ENCODE measurements at regions of chr11 and their contacts with region 1.

Region 1: DNA sequence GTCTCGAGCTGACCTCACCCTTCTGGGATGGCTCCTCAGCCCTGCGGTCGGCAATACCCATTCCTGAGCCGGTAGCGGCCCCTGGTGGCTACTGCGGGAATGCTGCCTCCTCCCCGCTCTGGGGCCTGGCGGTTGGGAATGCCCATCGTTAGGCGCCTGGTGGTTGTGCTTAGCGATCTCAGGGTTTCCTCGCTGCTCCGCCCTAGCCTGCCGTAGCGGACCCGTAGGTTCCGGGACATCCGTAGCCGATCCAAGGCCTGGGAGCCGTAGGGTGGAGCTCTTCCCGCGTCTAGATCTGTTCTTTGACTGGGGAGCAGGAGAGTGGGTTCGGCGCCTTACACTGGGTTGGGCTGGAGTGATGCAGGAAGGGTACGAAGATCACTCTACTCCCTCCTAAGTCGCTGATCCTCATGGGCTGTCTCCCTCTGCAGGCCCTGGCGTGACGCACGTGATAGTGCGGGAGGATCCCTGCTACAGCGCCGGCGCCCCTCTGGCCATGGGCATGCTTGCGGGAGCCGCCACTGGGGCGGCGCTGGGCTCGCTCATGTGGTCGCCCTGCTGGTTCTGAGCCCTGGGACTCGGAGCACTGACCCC is 14.8 kb downstream of the PLEKHB1 start:
- DNase-seq: peak; percentile 50 to 87
- H3K4me3 ChIP-seq: no peak overlapping the region
- H3K27ac ChIP-seq: no peak overlapping the region
- H3K4me1 ChIP-seq: peaks cover 14% of the 10 kb centered on the region
- H3K27me3 ChIP-seq: no peaks in the 10 kb centered on the region
- CTCF ChIP-seq: peak; percentile 97

Region 2: GRCh38 chr11:73404048-73404447 is 257.1 kb before region 1 on chr11:
- CTCF ChIA-PET with region 1: no interaction called
- POLR2A ChIA-PET with region 1: no interaction called
- intact Hi-C with region 1: loop called (anchors 1 kb)
- DNase-seq: peak in 1 of 2 experiments; percentile 47
- H3K4me3 ChIP-seq: no peak overlapping the region
- H3K27ac ChIP-seq: no peak overlapping the region
- H3K4me1 ChIP-seq: no peaks in the 10 kb centered on the region
- H3K27me3 ChIP-seq: no peaks in the 10 kb centered on the region
- CTCF ChIP-seq: peak; percentile 58

Region 3: GRCh38 chr11:73554671-73555320 is 106.3 kb before region 1 on chr11:
- CTCF ChIA-PET with region 1: no interaction called
- POLR2A ChIA-PET with region 1: no interaction called
- intact Hi-C with region 1: no loop called
- DNase-seq: no peak
- H3K4me3 ChIP-seq: no peak overlapping the region
- H3K27ac ChIP-seq: no peak overlapping the region
- H3K4me1 ChIP-seq: no peaks in the 10 kb centered on the region
- H3K27me3 ChIP-seq: no peaks in the 10 kb centered on the region
- CTCF ChIP-seq: no peak

Region 4: DNA sequence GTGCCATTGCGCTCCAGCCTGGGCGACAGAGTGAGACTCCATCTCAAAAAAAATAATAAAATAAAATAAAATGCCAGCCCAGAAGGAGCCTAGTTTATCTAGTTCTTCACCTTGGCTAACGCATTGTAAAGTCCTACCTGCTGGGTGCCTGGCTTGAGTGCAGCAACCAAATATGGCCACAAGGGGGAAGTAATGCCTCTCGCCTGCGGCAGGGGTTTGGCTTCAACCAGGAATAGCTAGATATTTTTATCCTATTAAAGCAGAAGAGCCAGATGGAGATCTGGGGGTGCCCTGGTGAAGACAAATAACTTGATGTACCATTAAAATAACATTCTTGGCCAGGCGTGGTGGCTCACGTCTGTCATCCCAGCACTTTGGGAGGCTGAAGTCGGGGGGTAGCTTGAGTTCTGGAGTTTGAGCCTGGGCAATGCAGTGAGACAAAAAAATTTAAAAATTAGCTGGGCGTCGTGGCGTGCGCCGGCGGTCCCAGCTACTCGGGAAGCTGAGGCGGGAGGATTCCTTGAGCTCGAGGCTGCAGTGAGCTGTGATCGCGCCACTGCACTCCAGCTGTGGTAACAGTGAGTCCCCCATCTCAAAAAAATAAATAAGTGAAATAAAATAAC is 35.3 kb before region 1 on chr11:
- CTCF ChIA-PET with region 1: interaction called, 59 read pairs
- POLR2A ChIA-PET with region 1: no interaction called
- intact Hi-C with region 1: loop called (anchors 1 kb)
- DNase-seq: peak; percentile 71 to 84
- H3K4me3 ChIP-seq: no peak overlapping the region; the same call in 1 of the 2 replicates
- H3K27ac ChIP-seq: no peak overlapping the region
- H3K4me1 ChIP-seq: 0 out of 2 replicates have a peak, but pooled peaks cover 4% of the 10 kb centered on the region
- H3K27me3 ChIP-seq: 0 out of 2 replicates have a peak, but pooled peaks cover 3% of the 10 kb centered on the region
- CTCF ChIP-seq: peak; percentile 96

Region 5: GRCh38 chr11:73647459-73648100 is 13.6 kb before region 1 on chr11:
- CTCF ChIA-PET with region 1: interaction called, 11 read pairs
- POLR2A ChIA-PET with region 1: no interaction called
- intact Hi-C with region 1: no loop called
- DNase-seq: peak; percentile 83 to 97
- H3K4me3 ChIP-seq: peak overlapping the region; percentile 49; the same call in 1 of the 2 replicates
- H3K27ac ChIP-seq: no peak overlapping the region
- H3K4me1 ChIP-seq: peaks cover 7% of the 10 kb centered on the region
- H3K27me3 ChIP-seq: no peaks in the 10 kb centered on the region
- CTCF ChIP-seq: no peak